Activated CD4-positive, alpha-beta T cell treated with anti-CD3 and anti-CD28 coated beads for 36 hours (primary cell): ENCODE measurements at regions of chr7 and their contacts with region 1.

Region 1: DNA sequence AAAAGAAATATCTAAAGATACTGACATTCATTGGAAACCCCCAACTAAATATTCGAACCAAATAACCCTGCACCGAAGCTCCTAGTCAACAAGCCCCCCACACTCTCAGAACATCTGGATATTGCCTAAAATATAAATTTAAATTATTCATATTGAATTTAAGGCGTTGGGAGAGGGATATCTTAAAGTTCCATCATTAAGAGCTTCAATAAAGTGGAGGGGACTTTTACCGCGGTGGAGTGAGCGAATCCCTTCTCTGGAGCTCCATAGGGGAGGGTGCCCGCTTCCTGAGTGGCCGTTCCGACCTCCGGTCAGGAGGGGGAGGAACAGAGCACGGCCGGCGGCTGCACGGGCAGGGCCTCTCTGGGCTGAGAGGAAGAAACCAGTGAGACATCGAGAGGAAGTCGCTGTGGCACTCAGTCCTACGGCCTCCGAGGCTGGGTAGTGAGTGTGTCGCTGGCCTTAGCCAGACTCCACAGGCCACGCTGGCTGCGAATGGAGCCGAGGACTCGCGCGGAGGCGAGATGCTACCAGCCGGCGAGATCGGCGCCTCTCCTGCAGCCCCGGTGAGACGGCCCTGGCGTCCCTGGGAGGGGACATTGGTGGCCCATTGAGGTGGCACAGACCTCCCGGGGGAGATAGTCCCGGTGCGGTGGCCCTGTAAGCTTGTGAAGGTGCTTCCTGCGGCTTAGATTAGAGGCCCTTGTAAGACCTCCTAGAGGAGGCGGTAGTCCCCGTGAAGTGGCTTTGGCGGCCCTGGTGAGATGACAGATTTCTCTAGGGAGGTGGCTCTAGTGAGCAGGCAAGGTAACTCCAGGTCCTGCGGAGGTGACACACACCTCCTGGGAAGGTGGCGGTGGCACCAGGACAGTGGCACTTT is at the start of gene RINT1:
- DNase-seq: peak; percentile 94
- ATAC-seq: peak; percentile 94
- H3K4me3 Mint-ChIP-seq: peak within 1 kb of the TSS; percentile 91
- H3K27ac Mint-ChIP-seq: peak within 1 kb of the TSS; percentile 91
- H3K4me1 Mint-ChIP-seq: peaks cover 23% of the 10 kb centered on the region
- H3K27me3 Mint-ChIP-seq: no peaks in the 10 kb centered on the region
- total RNA-seq, gene RINT1: 21.2 to 26.2 TPM

Region 2: DNA sequence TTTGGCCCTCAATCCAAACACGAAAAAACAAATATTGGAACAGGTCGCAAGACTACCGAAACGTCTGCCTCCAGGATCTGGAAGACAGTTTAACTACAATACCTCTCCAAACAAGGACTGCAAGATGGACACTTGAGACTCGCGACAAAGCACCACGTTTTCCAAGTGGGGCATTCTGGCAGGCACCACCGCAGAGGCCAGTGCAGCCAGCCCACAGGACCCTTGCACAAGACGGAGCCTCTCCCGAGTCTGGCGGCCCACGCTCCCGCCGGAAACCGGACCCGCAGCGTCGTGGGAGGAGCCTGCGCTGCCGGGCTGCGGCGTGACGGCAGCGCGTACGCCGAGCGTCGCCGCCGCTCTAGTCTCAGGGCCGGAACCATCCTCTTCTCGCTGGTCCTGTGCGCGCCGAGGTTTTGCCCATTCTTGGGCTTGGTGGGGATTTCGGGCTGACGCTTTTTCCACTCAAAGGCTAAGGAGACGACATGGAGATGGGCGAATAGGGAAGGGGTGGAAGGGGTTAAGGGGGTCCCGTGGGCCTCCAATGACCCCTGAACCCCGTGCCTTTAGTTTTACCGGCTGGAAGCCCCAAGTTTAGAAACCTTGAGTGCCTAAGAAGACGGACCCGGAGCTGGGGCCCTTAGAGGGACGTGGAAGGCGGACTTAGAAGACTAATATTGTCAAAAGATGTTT is 1324.2 kb before region 1 on chr7 and contains the start of gene ORC5:
- CTCF ChIA-PET with region 1: no interaction called
- POLR2A ChIA-PET with region 1: no interaction called
- intact Hi-C with region 1: loop called in 1 of 2 experiments (anchors 5 kb)
- DNase-seq: peak; percentile 88
- ATAC-seq: peak; percentile 100
- H3K4me3 Mint-ChIP-seq: peak within 1 kb of the TSS; percentile 87
- H3K27ac Mint-ChIP-seq: peak within 1 kb of the TSS; percentile 93
- H3K4me1 Mint-ChIP-seq: peaks cover 25% of the 10 kb centered on the region
- H3K27me3 Mint-ChIP-seq: peaks cover 6% of the 10 kb centered on the region
- total RNA-seq, gene ORC5: 23.5 to 25.1 TPM